Cardiac septum (tissue), 1 donor: ENCODE measurements at regions of chr11 and their contacts with region 1.

Region 1: GRCh38 chr11:103798026-103798425 is 238.4 kb upstream of the DDI1 start:
- DNase-seq: no peak

Region 2: GRCh38 chr11:103737747-103738146 is 60.3 kb before region 1 on chr11:
- intact Hi-C with region 1: loop called (anchors 5 kb)
- DNase-seq: no peak

Region 3: GRCh38 chr11:103870821-103871309 is 72.8 kb after region 1 on chr11:
- intact Hi-C with region 1: loop called (anchors 2 kb)
- DNase-seq: no peak

Region 4: GRCh38 chr11:103947546-103947919 is 149.5 kb after region 1 on chr11:
- intact Hi-C with region 1: loop called (anchors 5 kb)
- DNase-seq: no peak